ENCODE measurements at regions of chr15 and their contacts with region 1.

Region 1: DNA sequence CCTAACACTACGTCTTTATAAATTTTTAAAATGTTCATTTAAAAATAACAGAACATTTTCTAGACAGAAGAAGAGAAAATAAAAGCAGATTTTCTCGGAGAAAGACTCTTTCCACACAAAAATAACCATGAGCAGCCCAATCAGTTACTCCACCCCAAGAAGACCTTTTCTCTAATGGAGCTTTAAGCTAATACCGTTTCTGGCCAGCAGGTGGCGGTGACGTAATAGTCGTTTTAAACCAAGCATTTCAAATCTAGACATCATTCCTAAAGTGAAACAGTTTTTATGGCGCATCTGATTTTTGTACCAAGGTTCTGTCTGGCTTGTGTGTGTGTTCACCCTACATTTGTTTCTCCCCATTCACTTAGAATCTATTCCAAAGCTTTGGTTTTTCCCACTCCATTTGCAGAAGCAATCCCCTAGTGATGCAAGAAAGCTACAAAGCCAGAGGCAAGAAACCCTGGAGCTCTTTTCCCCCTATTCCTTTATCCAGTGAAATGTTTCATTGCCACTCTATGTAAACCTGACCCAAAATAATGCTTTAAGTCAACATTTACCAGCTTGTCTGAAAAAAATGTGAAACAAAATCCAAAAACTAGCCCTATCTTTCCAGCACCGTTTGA is 336.7 kb upstream of the IGF1R start:
- DNase-seq: peak; percentile 65

Region 2: GRCh38 chr15:98160236-98160635 is 151.4 kb before region 1 on chr15:
- CTCF ChIA-PET with region 1: no interaction called
- POLR2A ChIA-PET with region 1: no interaction called
- DNase-seq: no peak

Region 3: GRCh38 chr15:98241030-98241554 is 70.6 kb before region 1 on chr15:
- CTCF ChIA-PET with region 1: no interaction called
- POLR2A ChIA-PET with region 1: no interaction called
- DNase-seq: peak; percentile 30

Region 4: GRCh38 chr15:98292442-98293240 is 19.0 kb before region 1 on chr15:
- CTCF ChIA-PET with region 1: interaction called, 11 read pairs
- POLR2A ChIA-PET with region 1: no interaction called
- DNase-seq: peak; percentile 86

Region 5: GRCh38 chr15:98321896-98322295 is 10.2 kb after region 1 on chr15:
- CTCF ChIA-PET with region 1: interaction called, 23 read pairs
- POLR2A ChIA-PET with region 1: no interaction called
- DNase-seq: no peak

Region 6: GRCh38 chr15:98421419-98422129 is 109.9 kb after region 1 on chr15:
- CTCF ChIA-PET with region 1: interaction called, 46 read pairs
- POLR2A ChIA-PET with region 1: no interaction called
- DNase-seq: peak; percentile 92

Region 7: DNA sequence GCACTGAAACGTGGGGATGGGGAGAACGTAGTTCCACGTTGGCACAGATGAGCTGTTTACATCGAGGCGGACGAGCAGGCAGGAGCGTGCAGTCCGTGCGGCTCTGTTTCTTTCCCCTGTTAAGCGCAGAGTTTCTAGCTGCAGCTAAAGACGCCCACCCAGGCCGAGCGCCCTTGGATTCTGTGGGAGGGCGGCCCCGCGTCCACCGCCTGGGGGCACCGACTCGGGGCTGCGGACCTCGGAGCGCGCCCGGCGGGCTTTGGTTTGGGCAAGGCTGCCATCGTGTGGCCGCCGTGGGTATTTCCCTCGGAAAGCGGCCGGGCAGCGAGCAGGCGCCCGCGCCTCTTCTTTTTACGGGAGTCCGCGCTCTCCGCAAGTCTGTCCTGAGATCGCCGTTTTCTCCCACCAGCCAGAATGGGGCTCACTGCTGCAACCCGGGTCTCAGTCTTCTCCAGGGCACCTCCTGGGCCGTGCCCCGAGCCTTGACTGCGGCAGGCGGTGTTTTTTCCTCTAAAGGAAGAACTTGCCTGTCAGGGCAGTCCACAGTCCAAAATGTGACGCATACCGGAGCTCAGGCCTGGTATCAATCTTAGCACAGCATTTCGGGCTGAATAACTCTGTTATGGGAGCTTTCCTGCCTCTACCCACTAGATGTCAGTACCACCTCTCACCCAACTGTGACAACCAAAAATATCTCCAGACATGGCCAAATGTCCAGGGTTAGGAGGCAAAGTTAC is 116.7 kb after region 1 on chr15:
- CTCF ChIA-PET with region 1: interaction called, 46 read pairs
- POLR2A ChIA-PET with region 1: no interaction called
- DNase-seq: peak; percentile 92

Measured in HEK293T (cell line).